HepG2 (cell line): ENCODE measurements at regions of chr4 and their contacts with region 1.

Region 1: DNA sequence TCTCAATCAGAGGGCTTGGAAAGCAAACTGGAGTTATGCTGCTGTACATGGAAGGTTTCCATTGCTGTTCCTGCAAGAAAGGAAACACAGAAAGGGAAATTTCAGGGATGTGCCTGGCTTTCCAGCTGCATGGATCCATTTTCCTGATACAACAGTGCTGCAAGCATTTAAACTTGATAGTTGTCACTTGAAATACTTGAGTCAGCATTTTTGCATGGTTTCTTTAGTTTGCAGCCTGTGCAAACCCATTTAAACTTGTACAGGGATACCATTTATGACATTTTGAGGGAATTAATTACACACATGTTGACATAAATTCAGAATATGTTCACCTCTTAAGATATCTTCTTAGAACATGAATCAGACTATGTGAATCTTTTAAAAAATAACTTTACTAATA is 131.1 kb upstream of the RASGEF1B start:
- DNase-seq: no peak
- ATAC-seq: no peak
- H3K4me3 ChIP-seq: no peak overlapping the region
- H3K27ac ChIP-seq: no peak overlapping the region
- H3K4me1 ChIP-seq: peaks cover 8% of the 10 kb centered on the region; the same call in 1 of the 2 replicates
- H3K27me3 ChIP-seq: no peaks in the 10 kb centered on the region; a peak in 1 of 5 replicates
- CTCF ChIP-seq: no peak
- EP300 ChIP-seq: no peak
- POLR2A ChIP-seq: no peak
- RAD21 ChIP-seq: no peak

Region 2: DNA sequence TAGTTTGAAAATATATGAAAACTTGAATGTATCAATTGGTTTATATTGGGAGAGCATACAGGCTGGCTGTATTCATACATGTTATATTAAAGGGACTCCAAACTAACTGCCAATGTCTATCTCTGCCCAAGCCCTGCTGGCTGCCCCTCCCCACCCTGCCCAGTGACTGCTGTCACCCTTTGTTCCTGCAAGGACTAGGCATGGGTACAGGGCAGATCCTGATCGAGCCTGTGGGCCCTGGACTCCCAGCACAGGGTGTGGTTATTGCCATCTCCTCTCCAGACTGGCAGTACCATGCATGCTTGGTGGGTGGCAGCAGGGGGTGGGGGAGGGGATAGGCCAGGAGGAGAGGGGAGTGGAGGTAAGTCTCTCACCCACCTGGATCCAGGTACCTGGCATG is 36.4 kb after region 1 on chr4:
- CTCF ChIA-PET with region 1: no interaction called
- POLR2A ChIA-PET with region 1: no interaction called
- in situ Hi-C with region 1: no loop called
- intact Hi-C with region 1: loop called (anchors 1 kb)
- DNase-seq: no peak
- ATAC-seq: no peak
- H3K4me3 ChIP-seq: no peak overlapping the region
- H3K27ac ChIP-seq: no peak overlapping the region
- H3K4me1 ChIP-seq: peaks cover 20% of the 10 kb centered on the region; the same call in 1 of the 2 replicates
- H3K27me3 ChIP-seq: no peaks in the 10 kb centered on the region
- CTCF ChIP-seq: no peak
- EP300 ChIP-seq: no peak
- POLR2A ChIP-seq: no peak
- RAD21 ChIP-seq: no peak